Ascending aorta (tissue), 2 donors: ENCODE measurements at regions of chr3 and their contacts with region 1.

Region 1: DNA sequence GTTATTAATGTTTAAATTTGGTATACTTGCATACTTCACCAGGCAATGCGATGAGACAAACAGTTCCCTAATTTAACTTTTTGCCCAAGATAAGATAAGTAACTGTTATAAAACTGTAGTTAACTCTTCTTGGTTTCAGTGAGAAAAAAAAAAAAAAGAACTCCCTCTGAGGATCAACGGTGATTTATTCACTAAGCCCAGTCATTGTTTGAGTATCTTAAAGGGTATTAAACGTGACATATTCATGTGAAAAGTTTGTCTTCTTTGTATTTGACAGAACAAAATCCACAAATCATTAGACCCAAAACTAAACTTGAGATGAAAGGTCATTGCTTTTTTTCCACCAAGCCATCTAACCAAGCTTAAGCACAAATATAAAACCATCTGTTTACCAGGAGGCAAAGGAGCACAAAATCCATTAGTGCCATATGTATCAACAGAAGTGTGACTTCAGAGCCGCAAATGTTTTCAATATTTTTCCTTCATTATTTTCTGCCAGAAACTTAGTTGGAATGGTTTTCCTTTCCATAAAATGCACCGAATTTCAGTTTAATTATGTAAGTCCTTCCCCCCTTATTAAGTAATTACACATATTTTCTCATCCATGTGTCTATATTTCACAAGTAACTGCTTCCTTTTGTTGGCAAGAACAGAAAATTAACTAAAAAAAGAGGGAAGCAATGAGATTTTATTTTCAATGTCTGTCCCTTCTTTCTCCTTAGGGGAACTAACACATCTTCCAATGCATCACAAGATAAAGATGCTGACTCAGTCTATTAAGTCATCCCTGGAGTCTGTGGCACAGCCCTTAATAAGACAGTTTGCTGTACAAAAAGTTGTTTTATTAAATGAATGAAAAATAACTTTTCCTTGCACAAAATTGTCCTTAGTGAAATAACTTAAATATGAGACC is 92.2 kb upstream of the RAP2B start:
- DNase-seq: no peak
- H3K4me3 ChIP-seq: no peak overlapping the region
- H3K27ac ChIP-seq: no peak overlapping the region
- H3K4me1 ChIP-seq: no peaks in the 10 kb centered on the region
- H3K27me3 ChIP-seq: no peaks in the 10 kb centered on the region
- CTCF ChIP-seq: no peak

Region 2: DNA sequence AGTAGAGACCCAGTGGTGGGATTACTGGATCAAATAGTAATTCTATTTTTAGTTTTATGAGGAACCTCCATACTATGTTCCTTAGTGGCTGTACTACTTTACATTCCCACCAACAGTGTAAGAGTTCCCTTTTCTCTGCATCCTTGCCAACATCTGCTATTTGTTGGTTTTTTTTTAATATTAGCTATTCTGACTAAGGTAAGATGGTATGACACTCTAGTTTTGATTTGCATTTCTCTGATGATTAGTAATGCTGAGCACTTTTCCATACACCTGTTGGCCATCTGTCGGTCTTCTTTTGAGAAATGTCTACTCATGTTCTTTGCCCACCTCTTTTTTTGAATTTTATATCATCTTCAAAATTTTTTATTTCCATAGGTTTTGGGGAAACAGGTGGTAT is 57.9 kb after region 1 on chr3:
- intact Hi-C with region 1: loop called (anchors 5 kb)
- DNase-seq: no peak
- H3K4me3 ChIP-seq: no peak overlapping the region
- H3K27ac ChIP-seq: no peak overlapping the region
- H3K4me1 ChIP-seq: no peaks in the 10 kb centered on the region
- H3K27me3 ChIP-seq: no peaks in the 10 kb centered on the region
- CTCF ChIP-seq: no peak